Activated T-helper 1 cell treated with anti-CD3 and anti-CD28 coated beads, Interleukin-12 subunit alpha, Interleukin-12 subunit beta, Interleukin-2, Interleukin-4 antibody, amounts not matched to agents 30 ng/mL and 10 ng/mL and 1 ng/mL, durations not matched to agents 14 hours and 24 hours and 36 hours (primary cell): ENCODE measurements at regions of chr4 and their contacts with region 1.

Region 1: DNA sequence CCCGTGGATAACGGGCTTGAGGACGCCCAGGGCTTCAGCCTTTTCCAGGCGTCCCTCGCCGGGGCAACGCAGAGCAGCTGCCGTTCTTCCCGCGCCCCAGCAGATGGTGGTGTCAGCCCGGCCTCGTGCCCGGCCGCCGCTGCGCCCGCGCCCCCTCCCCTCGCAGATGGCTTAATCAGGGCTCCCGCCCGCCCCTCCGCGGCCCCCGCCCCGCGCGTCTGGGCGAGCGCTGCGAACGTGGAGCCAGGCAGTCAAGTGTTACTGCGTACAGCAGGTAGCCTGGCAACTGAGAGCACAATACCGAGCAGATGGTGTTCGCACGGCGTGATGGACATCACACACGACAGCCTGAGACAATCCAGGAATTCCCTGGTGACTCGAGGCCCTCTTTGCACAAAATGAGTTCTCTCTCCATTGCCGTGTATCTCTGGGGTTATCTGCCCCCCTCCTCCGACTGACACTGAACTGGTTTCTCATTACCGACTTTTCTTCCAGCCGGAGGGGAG is 69.3 kb downstream of the MGST2 start:
- DNase-seq: peak; percentile 42
- H3K4me3 Mint-ChIP-seq: peak overlapping the region; percentile 66
- H3K27ac Mint-ChIP-seq: no peak overlapping the region
- H3K4me1 Mint-ChIP-seq: peaks cover 6% of the 10 kb centered on the region
- H3K27me3 Mint-ChIP-seq: peaks cover 45% of the 10 kb centered on the region

Region 2: DNA sequence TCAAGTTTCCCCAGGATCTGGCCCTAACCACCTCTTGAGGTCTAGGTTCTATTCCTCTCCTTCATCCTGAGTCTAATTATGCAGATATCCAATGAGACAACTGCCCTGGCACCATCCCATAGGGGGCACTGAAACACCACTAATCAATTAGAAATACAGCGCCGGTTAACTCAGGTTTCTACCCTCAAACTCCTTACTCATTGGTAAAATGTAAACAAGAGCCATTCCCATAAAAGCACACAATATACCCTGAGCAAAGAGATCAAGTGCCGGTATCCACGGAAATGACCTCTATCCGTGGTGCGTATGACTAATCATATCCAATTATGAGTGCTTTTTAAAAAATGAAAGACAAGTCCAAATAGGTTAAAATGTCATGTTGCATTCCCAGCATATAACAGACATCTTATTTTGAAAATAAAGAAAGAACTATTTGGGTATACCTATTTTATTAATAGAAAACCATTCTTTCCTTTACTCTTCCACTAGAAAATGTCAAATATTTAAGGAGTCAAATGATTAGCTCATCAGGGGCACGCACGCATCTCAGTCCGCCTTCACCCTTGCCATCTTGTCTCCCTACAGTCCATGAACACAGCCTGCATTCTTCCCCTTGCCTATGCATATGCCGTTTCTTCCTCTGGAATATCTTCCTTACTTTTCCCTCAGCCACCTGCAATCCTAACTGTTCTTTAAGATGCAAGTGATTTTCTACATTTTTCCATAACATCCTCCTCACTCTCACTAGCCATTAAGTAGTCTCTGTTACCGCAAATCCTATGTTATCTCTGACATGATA is 278.0 kb after region 1 on chr4:
- intact Hi-C with region 1: loop called (anchors 10 kb)
- DNase-seq: peak; percentile 42
- H3K4me3 Mint-ChIP-seq: no peak overlapping the region
- H3K27ac Mint-ChIP-seq: no peak overlapping the region
- H3K4me1 Mint-ChIP-seq: peaks cover 10% of the 10 kb centered on the region
- H3K27me3 Mint-ChIP-seq: peaks cover 40% of the 10 kb centered on the region

Region 3: DNA sequence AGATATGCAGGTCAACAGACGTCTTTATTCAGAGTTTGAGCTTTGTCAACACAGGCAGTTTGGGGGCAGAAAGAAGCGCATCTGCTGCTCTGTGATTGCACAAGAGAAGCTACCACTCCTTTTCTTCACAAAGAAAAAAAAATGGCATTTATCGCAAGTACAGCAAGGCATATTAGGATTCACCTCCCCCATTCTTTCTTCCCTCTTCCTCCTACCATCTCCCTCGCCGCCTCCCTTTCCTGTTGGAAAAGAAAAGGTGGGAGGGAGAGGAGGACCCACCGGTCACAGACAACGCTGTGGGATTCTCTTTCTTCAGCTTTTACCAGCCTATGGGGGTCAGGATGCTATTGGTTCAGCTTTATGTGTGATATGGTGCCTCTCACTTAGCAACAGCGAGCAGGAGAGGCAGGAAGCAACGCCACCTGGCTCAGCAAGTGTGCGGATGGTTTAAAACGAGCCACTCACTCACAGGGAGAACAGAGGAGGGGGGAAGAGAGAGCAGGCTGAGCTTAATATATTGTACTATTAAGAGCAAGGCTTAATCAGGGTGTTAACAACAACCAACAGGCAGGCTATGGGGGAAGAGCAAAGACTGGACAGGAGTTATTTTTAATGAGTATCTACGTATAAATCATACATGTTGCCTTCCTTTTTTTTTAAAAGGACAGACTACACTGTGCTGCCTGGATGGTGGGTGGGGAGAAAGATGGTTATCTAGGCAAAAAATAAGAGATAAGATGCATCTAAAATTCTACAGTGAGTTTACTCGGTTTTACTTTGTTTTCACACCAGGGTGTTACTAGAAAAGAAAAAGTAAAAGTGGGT is 314.3 kb after region 1 on chr4:
- intact Hi-C with region 1: loop called (anchors 1 kb)
- DNase-seq: peak; percentile 11
- H3K4me3 Mint-ChIP-seq: peak overlapping the region; percentile 77
- H3K27ac Mint-ChIP-seq: no peak overlapping the region
- H3K4me1 Mint-ChIP-seq: peaks cover 32% of the 10 kb centered on the region
- H3K27me3 Mint-ChIP-seq: peaks cover 59% of the 10 kb centered on the region

Region 4: GRCh38 chr4:140326395-140326993 is 591.6 kb after region 1 on chr4:
- intact Hi-C with region 1: loop called (anchors 2 kb)
- DNase-seq: no peak
- H3K4me3 Mint-ChIP-seq: no peak overlapping the region
- H3K27ac Mint-ChIP-seq: no peak overlapping the region
- H3K4me1 Mint-ChIP-seq: peaks cover 12% of the 10 kb centered on the region
- H3K27me3 Mint-ChIP-seq: peaks cover 17% of the 10 kb centered on the region